GM12878 (cell line): ENCODE measurements at regions of chr5 and their contacts with region 1.

Region 1: DNA sequence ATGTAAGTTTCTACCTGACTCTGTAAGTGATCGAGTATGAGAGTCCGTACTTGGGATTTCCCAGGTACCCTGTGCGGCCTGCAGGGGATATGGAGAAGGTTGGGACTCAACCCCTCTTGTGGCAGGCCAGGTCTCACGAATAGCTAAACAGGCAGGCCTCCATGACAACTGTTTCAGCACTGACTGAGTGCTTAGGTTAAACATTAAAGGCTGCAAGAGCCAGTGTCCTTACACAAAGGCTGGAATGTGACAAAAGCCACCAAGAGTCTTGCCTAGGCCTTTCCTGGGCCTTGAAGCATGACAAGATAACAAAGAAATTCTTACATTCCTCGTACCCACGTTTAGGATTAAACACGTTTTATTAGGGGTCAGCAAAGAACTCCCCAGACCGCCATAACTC is 58.6 kb downstream of the THBS4 start:
- DNase-seq: no peak
- ATAC-seq: no peak
- H3K4me3 ChIP-seq: no peak overlapping the region
- H3K27ac ChIP-seq: no peak overlapping the region
- H3K4me1 ChIP-seq: no peaks in the 10 kb centered on the region
- H3K27me3 ChIP-seq: no peaks in the 10 kb centered on the region
- CTCF ChIP-seq: no peak
- EP300 ChIP-seq: no peak
- POLR2A ChIP-seq: no peak
- RAD21 ChIP-seq: no peak

Region 2: DNA sequence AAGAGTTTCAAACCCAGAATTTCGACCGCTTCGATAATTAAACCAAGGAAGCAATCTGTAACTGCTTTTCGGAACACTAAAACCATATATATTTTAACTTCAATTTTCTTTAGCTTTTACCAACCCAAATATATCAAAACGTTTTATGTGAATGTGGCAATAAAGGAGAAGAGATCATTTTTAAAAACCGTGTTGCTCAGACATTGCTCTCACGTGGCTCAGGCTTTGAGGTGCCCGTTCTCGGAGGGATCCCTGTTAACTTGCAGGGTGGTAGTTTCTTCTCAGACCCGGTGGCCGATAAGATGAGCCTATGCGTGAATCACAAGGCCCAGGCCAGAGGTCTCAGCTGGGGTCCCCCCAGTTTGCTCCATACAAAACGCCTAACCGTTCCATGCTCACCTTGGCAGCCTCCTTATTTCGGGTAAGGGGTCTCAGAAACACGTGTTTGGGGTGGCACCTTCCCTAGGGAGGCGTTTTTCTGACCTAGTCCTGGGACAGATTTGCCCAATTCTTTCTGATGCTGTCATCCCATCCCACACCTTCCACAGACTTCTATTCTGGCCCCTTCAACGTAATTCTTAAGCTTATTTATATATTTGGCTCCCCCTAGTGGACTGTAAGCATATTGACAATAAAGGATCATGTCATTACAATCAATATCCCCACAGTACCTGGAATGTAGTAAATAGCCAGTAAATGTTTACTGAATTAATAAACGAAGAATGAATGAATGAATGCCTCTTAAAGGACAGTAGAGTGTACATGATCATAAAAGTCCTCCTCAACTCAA is 10.5 kb before region 1 on chr5:
- CTCF ChIA-PET with region 1: interaction called, 16 read pairs
- POLR2A ChIA-PET with region 1: no interaction called
- RAD21 ChIA-PET with region 1: interaction called, 3 read pairs
- SMC1A ChIA-PET with region 1: interaction called, 8 read pairs
- in situ Hi-C with region 1: no loop called
- intact Hi-C with region 1: no loop called
- DNase-seq: no peak
- ATAC-seq: peak; percentile 92
- H3K4me3 ChIP-seq: no peak overlapping the region
- H3K27ac ChIP-seq: no peak overlapping the region
- H3K4me1 ChIP-seq: no peaks in the 10 kb centered on the region
- H3K27me3 ChIP-seq: no peaks in the 10 kb centered on the region
- CTCF ChIP-seq: peak; percentile 41 to 69 (median 66); a peak in 5 of 6 replicates
- EP300 ChIP-seq: no peak
- POLR2A ChIP-seq: no peak
- RAD21 ChIP-seq: peak; percentile 81

Region 3: DNA sequence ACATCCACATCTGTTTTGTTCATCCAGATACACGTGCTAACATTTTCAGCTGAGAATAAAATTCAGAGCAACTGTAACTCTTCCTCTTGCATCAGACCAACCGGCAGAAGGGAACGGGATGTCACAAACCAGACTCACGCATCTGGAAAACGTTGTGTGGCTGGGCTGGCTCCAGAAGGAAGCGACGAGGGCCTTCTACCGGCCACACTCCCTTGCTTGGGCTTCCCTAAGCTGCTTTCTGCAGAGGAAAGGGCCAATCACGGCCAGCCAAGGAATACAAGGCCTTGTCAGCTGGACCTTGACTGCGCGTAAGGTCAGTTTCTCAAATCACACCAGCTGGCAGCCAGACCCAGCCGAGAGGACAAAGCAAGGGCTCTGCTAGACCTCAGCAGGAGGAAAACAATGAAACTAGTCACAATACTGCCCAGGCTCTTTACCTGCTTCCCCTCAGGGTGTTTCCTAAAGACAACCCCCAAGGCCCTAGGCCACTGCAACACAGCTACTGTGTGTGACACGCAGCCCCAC is 47.4 kb after region 1 on chr5:
- CTCF ChIA-PET with region 1: interaction called, 8 read pairs
- POLR2A ChIA-PET with region 1: interaction called, 4 read pairs
- RAD21 ChIA-PET with region 1: interaction called, 6 read pairs
- SMC1A ChIA-PET with region 1: interaction called, 7 read pairs
- in situ Hi-C with region 1: no loop called
- intact Hi-C with region 1: loop called (anchors 2 kb)
- DNase-seq: no peak
- ATAC-seq: peak; percentile 32
- H3K4me3 ChIP-seq: no peak overlapping the region
- H3K27ac ChIP-seq: no peak overlapping the region
- H3K4me1 ChIP-seq: peaks cover 32% of the 10 kb centered on the region
- H3K27me3 ChIP-seq: no peaks in the 10 kb centered on the region
- CTCF ChIP-seq: no peak
- EP300 ChIP-seq: no peak
- POLR2A ChIP-seq: no peak
- RAD21 ChIP-seq: no peak

Region 4: GRCh38 chr5:80268916-80269315 is 175.1 kb after region 1 on chr5:
- CTCF ChIA-PET with region 1: interaction called, 168 read pairs
- POLR2A ChIA-PET with region 1: interaction called, 3 read pairs
- RAD21 ChIA-PET with region 1: interaction called, 114 read pairs
- SMC1A ChIA-PET with region 1: interaction called, 89 read pairs
- in situ Hi-C with region 1: no loop called
- intact Hi-C with region 1: no loop called
- DNase-seq: no peak
- ATAC-seq: no peak
- H3K4me3 ChIP-seq: no peak overlapping the region
- H3K27ac ChIP-seq: no peak overlapping the region
- H3K4me1 ChIP-seq: no peaks in the 10 kb centered on the region
- H3K27me3 ChIP-seq: no peaks in the 10 kb centered on the region
- CTCF ChIP-seq: no peak
- EP300 ChIP-seq: no peak
- POLR2A ChIP-seq: no peak
- RAD21 ChIP-seq: no peak

Region 5: GRCh38 chr5:80296121-80296520 is 202.3 kb after region 1 on chr5:
- CTCF ChIA-PET with region 1: no interaction called
- POLR2A ChIA-PET with region 1: no interaction called
- RAD21 ChIA-PET with region 1: no interaction called
- SMC1A ChIA-PET with region 1: no interaction called
- in situ Hi-C with region 1: loop called (anchors 5 kb)
- intact Hi-C with region 1: no loop called
- DNase-seq: no peak
- ATAC-seq: no peak
- H3K4me3 ChIP-seq: no peak overlapping the region
- H3K27ac ChIP-seq: no peak overlapping the region
- H3K4me1 ChIP-seq: no peaks in the 10 kb centered on the region
- H3K27me3 ChIP-seq: no peaks in the 10 kb centered on the region
- CTCF ChIP-seq: no peak
- EP300 ChIP-seq: no peak
- POLR2A ChIP-seq: no peak
- RAD21 ChIP-seq: no peak

Region 6: GRCh38 chr5:80487829-80488721 is 394.3 kb after region 1 on chr5 and contains the start of gene FAM151B:
- CTCF ChIA-PET with region 1: no interaction called
- POLR2A ChIA-PET with region 1: no interaction called
- RAD21 ChIA-PET with region 1: no interaction called
- SMC1A ChIA-PET with region 1: interaction called, 3 read pairs
- in situ Hi-C with region 1: no loop called
- intact Hi-C with region 1: loop called (anchors 10 kb)
- DNase-seq: peak; percentile 60
- ATAC-seq: peak; percentile 97
- H3K4me3 ChIP-seq: peak within 1 kb of the TSS; percentile 71
- H3K27ac ChIP-seq: no peak within 1 kb of the TSS
- H3K4me1 ChIP-seq: peaks cover 4% of the 10 kb centered on the region; the same call in 1 of the 2 replicates
- H3K27me3 ChIP-seq: no peaks in the 10 kb centered on the region
- CTCF ChIP-seq: no peak
- EP300 ChIP-seq: no peak
- POLR2A ChIP-seq: no peak
- RAD21 ChIP-seq: no peak
- polyA plus RNA-seq, gene FAM151B: 0.14 to 0.16 TPM